Common myeloid progenitor, CD34-positive (primary cell): ENCODE measurements at regions of chr22 and their contacts with region 1.

Region 1: DNA sequence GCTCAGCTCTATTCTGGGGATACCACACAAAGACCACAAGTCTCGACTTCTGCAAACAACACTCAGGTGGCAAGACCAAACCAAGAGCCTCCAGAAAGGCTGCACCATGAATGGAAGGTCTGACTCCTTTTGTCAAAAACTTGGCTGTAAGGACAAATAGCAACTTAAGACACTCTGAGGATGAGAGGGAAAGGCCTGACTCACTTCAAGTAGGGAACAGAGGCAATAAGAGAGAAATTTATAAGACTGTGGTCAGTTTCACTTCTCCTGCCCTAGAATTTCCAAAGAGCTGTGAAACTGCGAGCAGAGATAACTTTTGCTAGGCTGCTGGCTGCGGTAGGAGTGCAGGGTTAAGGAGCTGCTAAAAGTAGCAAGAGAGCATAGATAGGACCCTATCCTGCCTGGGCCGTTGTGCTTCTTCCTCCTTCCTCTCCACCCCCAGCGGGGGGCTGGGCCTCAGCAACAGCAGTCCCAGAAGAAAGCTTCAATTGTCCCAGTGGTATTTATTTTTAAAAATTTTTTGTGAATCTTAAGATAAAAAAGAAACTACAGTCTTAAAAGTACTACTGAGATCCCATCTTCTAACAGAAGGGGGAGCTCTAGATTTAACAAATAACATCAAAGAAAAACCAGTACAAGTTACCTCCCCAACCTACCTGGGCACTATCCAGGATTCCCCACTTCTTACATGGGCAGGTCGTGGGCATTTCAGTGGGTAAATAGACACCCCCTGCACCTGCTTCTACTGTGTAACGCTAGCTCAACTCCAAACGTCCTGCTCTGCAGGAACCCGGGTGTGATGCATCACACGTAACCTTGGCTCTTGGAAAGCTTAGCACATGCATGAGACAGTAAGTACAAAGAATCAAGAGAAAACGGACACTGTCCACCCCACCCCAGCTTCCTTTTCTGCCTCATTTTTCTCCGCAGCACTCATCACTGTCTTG is 66.4 kb downstream of the SGSM3 start:
- DNase-seq: peak; percentile 81 to 91 (median 88)
- H3K4me3 ChIP-seq: peak overlapping the region in 6 of 7 experiments; percentile 27 to 68 (median 41)
- H3K27ac ChIP-seq: peak overlapping the region; percentile 34 to 71
- H3K4me1 ChIP-seq: peaks cover 29 to 59% (median 47%) of the 10 kb centered on the region in 4 experiments
- H3K27me3 ChIP-seq: no peaks in the 10 kb centered on the region

Region 2: DNA sequence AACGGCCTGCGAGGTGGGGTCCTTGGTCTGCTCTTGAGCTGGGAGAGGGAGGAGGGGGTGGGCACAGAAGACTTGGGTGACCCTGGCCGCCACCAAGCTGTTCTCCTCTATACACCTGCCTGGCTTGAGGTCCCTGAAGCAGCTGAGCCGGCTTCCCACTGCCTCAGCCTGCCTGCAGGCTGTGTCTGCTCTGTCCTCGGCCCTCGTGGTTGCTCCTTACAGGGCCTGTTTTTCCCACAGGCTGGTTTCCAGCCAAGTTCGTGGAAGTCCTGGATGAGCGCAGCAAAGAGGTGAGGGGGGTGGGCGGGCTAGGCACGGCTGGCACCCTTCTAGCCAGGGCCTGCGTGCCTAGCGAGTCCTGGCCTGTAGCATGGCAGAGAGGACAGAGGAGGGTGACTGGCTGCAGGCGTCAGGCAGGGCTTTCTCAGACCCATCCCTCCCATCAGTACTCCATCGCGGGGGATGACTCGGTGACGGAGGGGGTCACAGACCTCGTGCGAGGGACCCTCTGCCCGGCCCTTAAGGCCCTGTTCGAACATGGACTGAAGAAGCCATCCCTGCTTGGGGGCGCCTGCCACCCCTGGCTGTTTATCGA is 28.9 kb before region 1 on chr22:
- CTCF ChIA-PET with region 1: no interaction called
- POLR2A ChIA-PET with region 1: no interaction called
- DNase-seq: no peak
- H3K4me3 ChIP-seq: no peak overlapping the region
- H3K27ac ChIP-seq: no peak overlapping the region
- H3K4me1 ChIP-seq: peaks cover 0 to under 1% (median 0%) of the 10 kb centered on the region in 4 experiments
- H3K27me3 ChIP-seq: no peaks in the 10 kb centered on the region

Region 3: DNA sequence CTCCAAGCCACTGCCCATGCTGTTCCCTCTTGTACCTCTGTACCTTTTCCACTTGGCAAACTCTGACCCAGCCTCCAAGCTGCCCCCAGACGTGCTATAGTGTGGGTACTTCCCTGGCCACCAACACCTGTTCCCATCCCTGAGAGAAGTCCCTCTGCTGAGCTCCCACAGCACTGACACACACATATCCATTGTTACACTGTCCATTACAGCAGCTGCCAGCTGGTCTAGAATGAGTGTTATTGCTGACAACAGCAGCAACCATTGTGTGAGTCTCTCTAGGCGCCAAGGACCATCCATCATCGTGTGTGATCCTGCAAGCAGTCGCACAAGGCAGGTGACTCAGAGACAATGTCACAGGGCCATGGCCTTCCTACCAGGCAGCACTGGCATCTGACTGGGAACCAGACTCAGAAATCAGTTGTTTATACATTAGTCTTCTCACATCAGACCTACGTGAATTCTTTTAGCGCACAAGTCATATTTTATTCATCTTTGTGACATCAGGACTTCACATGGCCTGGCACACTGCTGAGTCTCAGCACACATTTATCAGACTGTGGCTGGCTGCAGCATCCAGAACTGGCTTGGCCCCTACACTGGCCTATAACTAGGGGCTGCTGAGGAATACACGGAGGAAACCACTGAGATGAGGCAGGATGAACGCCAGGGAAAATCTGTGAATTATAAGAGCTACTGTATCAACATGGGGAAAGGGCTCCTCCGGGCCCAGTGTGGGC is 10.0 kb before region 1 on chr22:
- CTCF ChIA-PET with region 1: interaction called, 44 read pairs
- POLR2A ChIA-PET with region 1: no interaction called
- DNase-seq: no peak
- H3K4me3 ChIP-seq: no peak overlapping the region
- H3K27ac ChIP-seq: peak overlapping the region in 1 of 2 experiments; percentile 18
- H3K4me1 ChIP-seq: peaks cover 0 to 15% (median 3%) of the 10 kb centered on the region in 4 experiments
- H3K27me3 ChIP-seq: no peaks in the 10 kb centered on the region

Region 4: GRCh38 chr22:40463017-40463631 is 26.3 kb after region 1 on chr22:
- CTCF ChIA-PET with region 1: interaction called, 20 read pairs
- POLR2A ChIA-PET with region 1: interaction called, 4 read pairs
- DNase-seq: peak; percentile 89 to 96 (median 92)
- H3K4me3 ChIP-seq: peak overlapping the region; percentile 57 to 99 (median 87)
- H3K27ac ChIP-seq: peak overlapping the region; percentile 91 to 98
- H3K4me1 ChIP-seq: peaks cover 27 to 57% (median 48%) of the 10 kb centered on the region in 4 experiments
- H3K27me3 ChIP-seq: no peaks in the 10 kb centered on the region

Region 5: DNA sequence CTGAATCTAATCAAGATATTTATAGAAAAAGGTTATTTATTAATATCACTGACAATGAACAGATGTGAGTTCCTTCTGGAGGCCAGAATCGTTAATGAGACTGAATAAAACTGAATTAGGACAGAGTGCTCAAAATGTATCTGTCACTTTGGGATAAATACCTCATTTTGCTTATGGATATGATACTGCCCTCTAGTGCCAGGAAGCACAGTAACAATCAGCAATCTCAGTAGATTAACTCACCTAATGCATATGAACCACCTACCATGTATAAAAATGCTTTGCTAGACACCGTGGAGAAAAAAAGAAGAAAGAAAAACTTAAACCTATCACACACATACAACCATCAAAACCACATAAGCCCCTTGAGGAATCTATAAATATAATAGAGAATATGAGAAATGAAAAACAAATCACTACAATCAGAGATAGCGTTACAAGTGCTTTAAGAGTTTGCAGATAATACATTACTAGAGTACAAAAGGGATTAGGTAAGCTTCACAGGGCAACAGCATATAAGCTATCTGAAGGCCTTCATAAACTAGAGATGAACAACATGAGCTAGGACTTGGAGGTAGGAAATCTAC is 51.0 kb after region 1 on chr22:
- CTCF ChIA-PET with region 1: interaction called, 95 read pairs
- POLR2A ChIA-PET with region 1: no interaction called
- DNase-seq: peak; percentile 30 to 61 (median 61)
- H3K4me3 ChIP-seq: no peak overlapping the region
- H3K27ac ChIP-seq: no peak overlapping the region
- H3K4me1 ChIP-seq: peaks cover 20 to 29% (median 23%) of the 10 kb centered on the region in 4 experiments
- H3K27me3 ChIP-seq: no peaks in the 10 kb centered on the region

Region 6: GRCh38 chr22:40499187-40499753 is 62.5 kb after region 1 on chr22:
- CTCF ChIA-PET with region 1: no interaction called
- POLR2A ChIA-PET with region 1: no interaction called
- DNase-seq: peak; percentile 28 to 62 (median 47)
- H3K4me3 ChIP-seq: no peak overlapping the region
- H3K27ac ChIP-seq: no peak overlapping the region
- H3K4me1 ChIP-seq: peaks cover 0 to 6% (median 1%) of the 10 kb centered on the region in 4 experiments
- H3K27me3 ChIP-seq: no peaks in the 10 kb centered on the region

Region 7: GRCh38 chr22:40567106-40567505 is 130.3 kb after region 1 on chr22:
- CTCF ChIA-PET with region 1: no interaction called
- POLR2A ChIA-PET with region 1: no interaction called
- DNase-seq: no peak
- H3K4me3 ChIP-seq: no peak overlapping the region
- H3K27ac ChIP-seq: no peak overlapping the region
- H3K4me1 ChIP-seq: no peaks in the 10 kb centered on the region
- H3K27me3 ChIP-seq: no peaks in the 10 kb centered on the region

Region 8: DNA sequence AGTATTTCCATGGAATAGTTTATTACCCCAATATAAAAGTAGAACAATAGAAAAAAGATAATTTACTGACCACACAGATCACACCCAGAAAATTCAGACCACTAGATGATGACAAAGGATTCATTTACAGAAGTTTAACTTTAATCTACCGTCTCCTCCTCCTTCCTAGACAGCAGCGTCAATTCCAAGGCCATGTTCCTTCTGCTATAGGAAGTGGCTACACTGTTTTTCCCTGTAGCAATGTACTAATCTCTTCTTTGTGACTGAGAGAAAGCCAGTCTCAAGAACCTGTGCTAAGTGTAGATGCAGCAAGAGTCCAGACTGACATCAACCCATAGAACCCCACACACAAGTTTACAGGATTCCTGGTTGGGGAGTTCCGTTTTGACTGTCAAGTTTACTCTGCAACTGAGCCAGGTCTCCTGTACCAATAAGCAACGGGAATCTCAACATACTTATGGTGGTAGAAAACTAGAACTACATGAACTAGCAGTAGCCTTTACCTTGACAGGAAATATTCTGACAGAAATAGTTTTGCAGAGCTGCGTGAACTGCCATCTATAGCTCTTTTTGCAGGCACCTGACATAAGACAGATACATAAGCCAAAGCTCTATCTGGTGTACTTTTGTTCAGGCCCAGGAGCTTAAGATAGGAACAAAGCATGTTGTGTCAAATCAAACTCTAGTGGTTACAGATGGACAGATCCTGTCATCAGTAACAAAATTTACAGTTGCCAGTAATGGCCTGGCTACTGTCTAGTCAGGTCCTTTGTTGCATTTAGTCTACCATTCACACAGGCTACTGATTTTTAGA is 156.9 kb after region 1 on chr22:
- CTCF ChIA-PET with region 1: no interaction called
- POLR2A ChIA-PET with region 1: no interaction called
- DNase-seq: no peak
- H3K4me3 ChIP-seq: no peak overlapping the region
- H3K27ac ChIP-seq: no peak overlapping the region
- H3K4me1 ChIP-seq: peaks cover 4 to 21% (median 11%) of the 10 kb centered on the region in 4 experiments
- H3K27me3 ChIP-seq: no peaks in the 10 kb centered on the region

Region 9: GRCh38 chr22:40641269-40641668 is 204.5 kb after region 1 on chr22:
- CTCF ChIA-PET with region 1: interaction called, 11 read pairs
- POLR2A ChIA-PET with region 1: no interaction called
- DNase-seq: no peak
- H3K4me3 ChIP-seq: no peak overlapping the region
- H3K27ac ChIP-seq: no peak overlapping the region
- H3K4me1 ChIP-seq: peaks cover 0 to 18% (median 12%) of the 10 kb centered on the region in 4 experiments
- H3K27me3 ChIP-seq: no peaks in the 10 kb centered on the region